Activated CD8-positive, alpha-beta T cell treated with anti-CD3 and anti-CD28 coated beads for 36 hours (primary cell): ENCODE measurements at regions of chr11 and their contacts with region 1.

Region 1: DNA sequence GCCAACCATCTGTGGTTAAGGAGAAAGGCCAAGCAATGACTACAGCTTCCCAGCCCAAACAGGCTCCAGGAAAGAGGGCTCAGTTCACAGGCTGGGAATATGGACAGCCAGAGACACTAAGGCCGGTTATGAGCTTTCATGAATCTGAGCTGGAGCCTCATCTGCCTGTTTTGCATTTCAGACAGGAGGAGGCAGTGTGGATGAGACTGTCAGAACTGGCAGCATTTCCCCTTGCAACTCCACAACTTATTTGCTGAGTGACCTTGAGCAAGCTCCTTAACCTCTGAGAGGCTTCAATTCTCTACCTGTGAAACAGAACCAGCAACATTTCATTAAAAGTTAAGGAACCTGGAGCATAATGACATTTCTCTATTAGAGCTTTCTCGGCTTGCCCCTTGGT is 264.0 kb downstream of the ETS1 start:
- DNase-seq: peak; percentile 61
- ATAC-seq: no peak
- H3K4me3 Mint-ChIP-seq: peak overlapping the region; percentile 70
- H3K27ac Mint-ChIP-seq: peak overlapping the region; percentile 98
- H3K4me1 Mint-ChIP-seq: peaks cover 85% of the 10 kb centered on the region
- H3K27me3 Mint-ChIP-seq: no peaks in the 10 kb centered on the region
- CTCF ChIP-seq: peak; percentile 70

Region 2: GRCh38 chr11:128302425-128303186 is 20.8 kb before region 1 on chr11:
- CTCF ChIA-PET with region 1: interaction called, 43 read pairs
- POLR2A ChIA-PET with region 1: interaction called, 25 read pairs
- intact Hi-C with region 1: loop called (anchors 1 kb)
- DNase-seq: peak; percentile 80
- ATAC-seq: peak; percentile 90
- H3K4me3 Mint-ChIP-seq: peak overlapping the region; percentile 85
- H3K27ac Mint-ChIP-seq: peak overlapping the region; percentile 90
- H3K4me1 Mint-ChIP-seq: peaks cover 79% of the 10 kb centered on the region
- H3K27me3 Mint-ChIP-seq: no peaks in the 10 kb centered on the region
- CTCF ChIP-seq: peak; percentile 14

Region 3: GRCh38 chr11:128308794-128309193 is 14.6 kb before region 1 on chr11:
- CTCF ChIA-PET with region 1: interaction called, 13 read pairs
- POLR2A ChIA-PET with region 1: interaction called, 12 read pairs
- intact Hi-C with region 1: loop called (anchors 1 kb)
- DNase-seq: no peak
- ATAC-seq: no peak
- H3K4me3 Mint-ChIP-seq: no peak overlapping the region
- H3K27ac Mint-ChIP-seq: no peak overlapping the region
- H3K4me1 Mint-ChIP-seq: peaks cover 85% of the 10 kb centered on the region
- H3K27me3 Mint-ChIP-seq: no peaks in the 10 kb centered on the region
- CTCF ChIP-seq: no peak

Region 4: DNA sequence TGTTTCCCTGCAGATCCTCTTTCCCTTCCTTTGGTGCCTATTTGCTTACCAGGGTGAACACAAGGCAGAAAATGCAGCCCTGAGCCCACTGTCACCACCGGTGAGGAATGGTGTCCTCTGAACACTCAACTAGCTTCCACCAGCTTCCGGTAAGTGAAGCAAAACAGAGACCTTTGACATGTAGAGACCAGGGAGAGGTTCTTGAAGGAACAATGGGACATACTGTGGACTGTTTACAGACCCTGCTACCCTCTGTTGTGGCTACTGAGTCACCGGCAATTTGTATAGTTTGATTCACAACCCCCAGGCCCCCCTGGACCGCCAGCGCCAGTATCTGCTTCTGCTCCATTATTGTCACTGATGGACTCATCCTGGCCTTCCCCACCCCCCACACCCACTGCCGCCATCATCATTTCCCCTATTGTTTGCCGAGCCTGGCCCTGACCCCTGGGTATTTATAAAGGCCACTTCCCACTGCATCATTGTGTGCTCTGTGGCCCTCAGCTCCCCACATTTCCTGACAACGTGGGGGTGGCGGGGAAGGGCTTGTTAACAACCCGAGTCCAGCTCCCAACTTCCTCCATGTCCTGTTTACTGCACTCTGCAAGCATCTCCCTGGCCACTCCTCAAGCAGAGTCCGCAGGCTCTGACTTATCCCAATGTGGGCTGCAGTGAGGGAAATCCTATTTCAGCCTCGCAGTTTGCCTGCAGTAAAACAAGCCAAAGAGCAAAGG is 11.1 kb after region 1 on chr11:
- CTCF ChIA-PET with region 1: interaction called, 9 read pairs
- POLR2A ChIA-PET with region 1: interaction called, 11 read pairs
- intact Hi-C with region 1: no loop called
- DNase-seq: peak; percentile 34
- ATAC-seq: no peak
- H3K4me3 Mint-ChIP-seq: no peak overlapping the region
- H3K27ac Mint-ChIP-seq: no peak overlapping the region
- H3K4me1 Mint-ChIP-seq: peaks cover 55% of the 10 kb centered on the region
- H3K27me3 Mint-ChIP-seq: no peaks in the 10 kb centered on the region
- CTCF ChIP-seq: no peak

Region 5: GRCh38 chr11:128342511-128343134 is 19.2 kb after region 1 on chr11:
- CTCF ChIA-PET with region 1: interaction called, 20 read pairs
- POLR2A ChIA-PET with region 1: interaction called, 5 read pairs
- intact Hi-C with region 1: no loop called
- DNase-seq: peak; percentile 89
- ATAC-seq: peak; percentile 81
- H3K4me3 Mint-ChIP-seq: peak overlapping the region; percentile 69
- H3K27ac Mint-ChIP-seq: peak overlapping the region; percentile 86
- H3K4me1 Mint-ChIP-seq: peaks cover 84% of the 10 kb centered on the region
- H3K27me3 Mint-ChIP-seq: no peaks in the 10 kb centered on the region
- CTCF ChIP-seq: no peak

Region 6: GRCh38 chr11:128361451-128362020 is 38.2 kb after region 1 on chr11:
- CTCF ChIA-PET with region 1: no interaction called
- POLR2A ChIA-PET with region 1: no interaction called
- intact Hi-C with region 1: no loop called
- DNase-seq: no peak
- ATAC-seq: no peak
- H3K4me3 Mint-ChIP-seq: no peak overlapping the region
- H3K27ac Mint-ChIP-seq: no peak overlapping the region
- H3K4me1 Mint-ChIP-seq: peaks cover 9% of the 10 kb centered on the region
- H3K27me3 Mint-ChIP-seq: no peaks in the 10 kb centered on the region
- CTCF ChIP-seq: no peak

Region 7: GRCh38 chr11:128422576-128423370 is 99.4 kb after region 1 on chr11:
- CTCF ChIA-PET with region 1: interaction called, 23 read pairs
- POLR2A ChIA-PET with region 1: interaction called, 6 read pairs
- intact Hi-C with region 1: loop called (anchors 2 kb)
- DNase-seq: peak; percentile 99
- ATAC-seq: peak; percentile 93
- H3K4me3 Mint-ChIP-seq: peak overlapping the region; percentile 59
- H3K27ac Mint-ChIP-seq: peak overlapping the region; percentile 95
- H3K4me1 Mint-ChIP-seq: peaks cover 63% of the 10 kb centered on the region
- H3K27me3 Mint-ChIP-seq: no peaks in the 10 kb centered on the region
- CTCF ChIP-seq: no peak

Region 8: DNA sequence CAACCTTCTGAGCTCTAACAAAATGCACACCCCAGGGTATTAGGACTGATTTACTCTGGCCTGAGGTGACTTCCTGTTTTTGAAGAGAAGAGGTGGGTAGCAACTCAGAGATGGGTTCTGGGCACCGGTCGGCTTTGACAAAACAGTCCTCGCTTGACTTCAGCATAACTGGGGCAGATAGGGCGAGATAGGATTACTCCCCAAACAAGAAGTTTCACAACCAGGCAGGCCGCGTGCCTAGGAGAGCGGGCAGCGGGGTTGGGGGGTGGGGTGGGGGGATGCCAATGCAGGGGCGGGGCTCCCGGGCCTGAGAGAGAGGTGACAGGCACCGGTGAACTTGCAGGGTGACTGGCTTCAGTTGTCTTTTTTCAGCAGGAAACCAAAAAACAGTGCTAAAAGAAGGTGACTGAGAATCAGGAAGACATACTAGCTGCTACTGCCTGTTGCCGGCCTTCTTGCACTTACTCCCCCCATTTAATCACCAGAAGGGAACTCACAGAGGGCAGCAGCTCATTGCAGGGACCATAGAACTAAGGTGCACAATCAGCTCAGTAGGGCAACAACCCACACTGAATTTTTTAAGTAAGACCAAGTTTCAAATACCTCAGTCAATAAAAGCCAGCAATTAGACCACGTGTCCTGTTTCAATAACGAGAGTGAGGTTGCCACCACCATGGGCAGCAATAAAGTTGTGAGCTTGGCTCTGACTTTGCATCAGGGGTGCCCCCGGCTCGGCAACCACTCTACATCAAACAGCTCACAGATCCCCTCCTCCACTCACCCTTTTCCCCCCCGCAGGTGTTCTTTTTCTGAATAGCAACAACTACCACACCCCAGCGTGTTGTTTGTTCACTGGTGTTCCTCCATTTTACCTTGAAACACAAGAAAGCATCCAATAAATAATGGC is 301.1 kb after region 1 on chr11:
- CTCF ChIA-PET with region 1: interaction called, 17 read pairs
- POLR2A ChIA-PET with region 1: interaction called, 4 read pairs
- intact Hi-C with region 1: loop called (anchors 10 kb)
- DNase-seq: peak; percentile 77
- ATAC-seq: peak; percentile 57
- H3K4me3 Mint-ChIP-seq: peak overlapping the region; percentile 56
- H3K27ac Mint-ChIP-seq: peak overlapping the region; percentile 94
- H3K4me1 Mint-ChIP-seq: peaks cover 97% of the 10 kb centered on the region
- H3K27me3 Mint-ChIP-seq: no peaks in the 10 kb centered on the region
- CTCF ChIP-seq: no peak